ENCODE measurements at regions of chr6 and their contacts with region 1.

Region 1: DNA sequence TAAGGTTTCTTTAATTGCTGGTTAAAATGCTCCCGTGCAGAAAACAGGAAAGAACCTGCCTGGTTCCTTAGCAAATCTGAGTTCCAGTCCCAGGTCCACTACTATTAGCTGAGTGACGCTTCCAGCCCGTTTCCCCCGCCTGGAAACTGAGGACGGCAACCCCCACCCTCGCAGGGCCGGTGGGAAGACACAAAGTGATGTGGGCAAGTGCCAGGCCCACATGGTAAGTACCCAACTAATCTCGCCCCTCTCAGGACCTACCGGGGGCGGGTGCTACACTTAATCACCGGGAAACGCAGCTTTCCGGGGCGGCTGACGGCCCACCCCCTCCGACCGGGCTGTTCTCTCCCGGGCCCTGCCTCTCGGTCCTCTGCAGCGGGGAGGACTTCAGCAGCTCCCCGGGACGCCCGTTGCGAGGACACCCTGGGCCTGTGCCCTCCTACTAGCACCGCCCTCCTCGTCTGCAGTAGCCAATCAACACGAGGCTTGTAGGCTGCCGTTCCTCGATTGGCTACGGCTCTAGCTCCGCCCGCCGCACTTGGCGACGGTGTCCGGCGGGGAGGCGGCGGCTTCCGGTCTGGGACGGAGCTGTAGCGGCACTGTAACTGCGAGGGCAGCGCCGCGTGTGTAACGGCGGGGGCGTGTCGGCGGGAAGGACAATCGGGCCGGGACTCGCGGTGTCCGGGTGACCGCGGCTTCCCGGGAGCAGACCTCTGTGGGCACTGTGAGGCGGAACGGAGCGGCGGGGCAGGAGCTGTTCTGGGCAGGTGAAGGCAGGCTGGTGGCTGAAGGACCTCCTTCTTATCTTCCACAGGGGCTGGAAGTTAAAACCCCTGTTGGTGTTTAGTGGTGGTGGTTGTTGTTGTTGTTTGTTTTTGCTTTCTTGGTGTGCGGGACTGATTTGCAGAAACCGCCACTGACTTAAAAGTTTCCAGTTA is at the start of gene ZBTB9:
- DNase-seq: peak; percentile 95 to 96
- ATAC-seq: peak; percentile 99 to 100 (median 99)
- H3K4me3 ChIP-seq: peak within 1 kb of the TSS; percentile 61 to 97 (median 81)
- H3K27ac ChIP-seq: peak within 1 kb of the TSS in 9 of 10 donors; percentile 72 to 90 (median 87)
- H3K4me1 ChIP-seq: peaks cover 4 to 42% (median 17%) of the 10 kb centered on the region in 9 donors
- H3K27me3 ChIP-seq: no peaks in the 10 kb centered on the region
- CTCF ChIP-seq: no peak
- total RNA-seq, gene ZBTB9: 2.7 to 6.5 (median 4.9) TPM

Region 2: DNA sequence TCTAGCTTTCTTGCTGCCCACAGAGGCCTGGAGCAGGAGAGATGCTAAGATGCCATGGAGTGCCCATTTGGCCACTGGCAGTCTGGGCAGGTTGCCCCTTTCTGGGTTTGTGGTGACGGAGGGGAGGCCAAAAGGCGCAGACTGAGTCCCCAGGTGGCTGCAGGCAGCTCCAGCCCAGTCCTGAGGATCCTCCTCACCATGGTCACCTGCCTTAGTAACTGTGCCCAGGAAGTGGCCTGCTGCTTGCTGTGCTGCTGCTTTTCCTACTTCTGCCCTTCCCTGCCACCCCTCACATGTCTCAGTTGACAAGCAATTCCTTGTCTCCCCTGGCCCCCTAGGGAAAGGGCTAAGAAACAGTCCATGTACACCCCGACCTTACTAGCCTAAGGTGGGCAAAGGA is 98.0 kb before region 1 on chr6:
- intact Hi-C with region 1: no loop called
- DNase-seq: no peak
- ATAC-seq: no peak
- H3K4me3 ChIP-seq: no peak overlapping the region
- H3K27ac ChIP-seq: no peak overlapping the region
- H3K4me1 ChIP-seq: no peaks in the 10 kb centered on the region
- H3K27me3 ChIP-seq: peaks cover 0 to 12% (median 3%) of the 10 kb centered on the region in 7 donors
- CTCF ChIP-seq: no peak

Region 3: GRCh38 chr6:33481189-33481588 is 26.9 kb after region 1 on chr6:
- intact Hi-C with region 1: no loop called
- DNase-seq: no peak
- ATAC-seq: no peak
- H3K4me3 ChIP-seq: no peak overlapping the region
- H3K27ac ChIP-seq: no peak overlapping the region
- H3K4me1 ChIP-seq: no peaks in the 10 kb centered on the region
- H3K27me3 ChIP-seq: peaks cover 0 to 10% (median 0%) of the 10 kb centered on the region in 7 donors
- CTCF ChIP-seq: no peak

Region 4: GRCh38 chr6:33570806-33571636 is 116.7 kb after region 1 on chr6:
- intact Hi-C with region 1: loop called in 8 of 10 experiments (anchors 10 kb)
- DNase-seq: peak; percentile 83 to 84
- ATAC-seq: peak; percentile 92 to 98 (median 96)
- H3K4me3 ChIP-seq: peak overlapping the region; percentile 40 to 72 (median 59)
- H3K27ac ChIP-seq: peak overlapping the region; percentile 46 to 94 (median 88)
- H3K4me1 ChIP-seq: peaks cover 5 to 17% (median 9%) of the 10 kb centered on the region in 9 donors
- H3K27me3 ChIP-seq: no peaks in the 10 kb centered on the region
- CTCF ChIP-seq: peak in 3 of 9 donors; percentile 19 to 27 (median 23)

Region 5: GRCh38 chr6:34990971-34991560 is 1536.8 kb after region 1 on chr6:
- intact Hi-C with region 1: no loop called
- DNase-seq: no peak
- ATAC-seq: no peak
- H3K4me3 ChIP-seq: no peak overlapping the region
- H3K27ac ChIP-seq: no peak overlapping the region
- H3K4me1 ChIP-seq: peaks cover 0 to 12% (median 8%) of the 10 kb centered on the region in 9 donors
- H3K27me3 ChIP-seq: no peaks in the 10 kb centered on the region
- CTCF ChIP-seq: no peak